Lower leg skin (tissue), 4 donors: ENCODE measurements at regions of chr5 and their contacts with region 1.

Region 1: GRCh38 chr5:148998174-148998797 is 64.6 kb downstream of the SH3TC2 start:
- DNase-seq: peak in 1 of 2 donors; percentile 68
- H3K4me3 ChIP-seq: no peak overlapping the region
- CTCF ChIP-seq: peak in 1 of 3 donors; percentile 39
- POLR2A ChIP-seq: no peak

Region 2: GRCh38 chr5:148740966-148741742 is 257.1 kb before region 1 on chr5:
- intact Hi-C with region 1: loop called (anchors 5 kb)
- DNase-seq: no peak
- H3K4me3 ChIP-seq: no peak overlapping the region
- CTCF ChIP-seq: peak in 1 of 3 donors; percentile 72
- POLR2A ChIP-seq: no peak